ENCODE measurements at regions of chr3 and their contacts with region 1.

Region 1: GRCh38 chr3:188584162-188584529 is 430.2 kb downstream of the LPP start:
- DNase-seq: no peak
- H3K4me3 Mint-ChIP-seq: peak overlapping the region; percentile 13
- H3K27ac Mint-ChIP-seq: peak overlapping the region; percentile 86
- H3K4me1 Mint-ChIP-seq: peaks cover 30% of the 10 kb centered on the region
- H3K27me3 Mint-ChIP-seq: no peaks in the 10 kb centered on the region

Region 2: GRCh38 chr3:188294823-188295487 is 289.2 kb before region 1 on chr3:
- intact Hi-C with region 1: loop called (anchors 10 kb)
- DNase-seq: no peak
- H3K4me3 Mint-ChIP-seq: no peak overlapping the region
- H3K27ac Mint-ChIP-seq: no peak overlapping the region
- H3K4me1 Mint-ChIP-seq: peaks cover 66% of the 10 kb centered on the region
- H3K27me3 Mint-ChIP-seq: no peaks in the 10 kb centered on the region